Gastrocnemius medialis (tissue), 4 donors: ENCODE measurements at regions of chr6 and their contacts with region 1.

Region 1: DNA sequence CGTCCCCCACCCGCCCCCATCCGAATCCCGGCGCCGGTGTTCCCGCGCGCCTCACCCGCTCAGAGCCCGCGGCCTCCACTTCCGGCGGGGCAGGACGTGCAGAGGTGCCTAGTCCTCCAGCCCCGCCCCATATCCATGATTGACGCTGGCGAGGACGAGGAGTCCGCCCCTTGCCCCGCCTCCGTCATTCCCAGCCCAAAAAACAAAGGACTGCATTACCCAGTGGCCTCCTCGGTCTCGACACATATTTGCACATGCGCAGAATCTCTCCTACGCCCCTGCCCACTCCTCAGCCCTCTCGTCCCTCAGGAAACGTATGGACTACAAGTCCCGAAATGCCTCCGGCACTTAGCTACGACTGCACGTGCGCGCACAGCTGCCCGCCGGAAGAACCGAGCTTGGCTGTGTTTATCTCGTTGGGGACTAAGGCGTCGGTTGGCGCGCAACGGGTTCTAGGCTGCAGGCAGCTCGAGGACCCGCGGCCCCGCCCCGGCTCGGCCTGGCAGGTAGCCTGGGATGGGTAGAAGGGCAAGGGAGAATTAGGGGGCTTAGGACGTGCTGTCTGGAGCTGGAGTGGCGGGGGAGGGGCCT is at the starts of genes KLHDC3 and MEA1:
- DNase-seq: peak; percentile 100
- ATAC-seq: peak; percentile 94 to 97
- H3K4me3 ChIP-seq: peak within 1 kb of the TSS; percentile 77 to 90 (median 82)
- H3K27ac ChIP-seq: peak within 1 kb of the TSS; percentile 95 to 98 (median 98)
- H3K4me1 ChIP-seq: peaks cover 54 to 59% of the 10 kb centered on the region in 2 donors
- H3K27me3 ChIP-seq: no peaks in the 10 kb centered on the region
- CTCF ChIP-seq: no peak
- POLR2A ChIP-seq: peak; percentile 66
- total RNA-seq, gene KLHDC3: 66.5 to 164 (median 119) TPM
- total RNA-seq, gene MEA1: 25.0 to 33.5 (median 25.9) TPM

Region 2: GRCh38 chr6:41735427-41736356 is 1278.2 kb before region 1 on chr6 and contains the start of gene TFEB:
- in situ Hi-C with region 1: no loop called
- intact Hi-C with region 1: loop called (anchors 10 kb)
- DNase-seq: peak; percentile 92 to 93
- ATAC-seq: peak; percentile 43 to 51
- H3K4me3 ChIP-seq: peak within 1 kb of the TSS; percentile 76 to 97 (median 90)
- H3K27ac ChIP-seq: peak within 1 kb of the TSS; percentile 97 to 99 (median 98)
- H3K4me1 ChIP-seq: peaks cover 12 to 19% of the 10 kb centered on the region in 2 donors
- H3K27me3 ChIP-seq: no peaks in the 10 kb centered on the region
- CTCF ChIP-seq: peak; percentile 91 to 100 (median 100)
- POLR2A ChIP-seq: peak; percentile 94 to 97
- total RNA-seq, gene TFEB: 82.8 to 121 (median 93.3) TPM

Region 3: GRCh38 chr6:42217519-42218367 is 796.2 kb before region 1 on chr6 and contains the start of gene MRPS10:
- in situ Hi-C with region 1: no loop called
- intact Hi-C with region 1: loop called (anchors 10 kb)
- DNase-seq: peak; percentile 91 to 94
- ATAC-seq: peak; percentile 100
- H3K4me3 ChIP-seq: peak within 1 kb of the TSS; percentile 73 to 89 (median 84)
- H3K27ac ChIP-seq: peak within 1 kb of the TSS; percentile 81 to 90 (median 86)
- H3K4me1 ChIP-seq: peaks cover 22 to 25% of the 10 kb centered on the region in 2 donors
- H3K27me3 ChIP-seq: no peaks in the 10 kb centered on the region
- CTCF ChIP-seq: no peak
- POLR2A ChIP-seq: peak; percentile 41 to 76
- total RNA-seq, gene MRPS10: 52.2 to 63.7 (median 56.0) TPM

Region 4: GRCh38 chr6:42928986-42929820 is 84.7 kb before region 1 on chr6 and contains the start of gene CNPY3:
- in situ Hi-C with region 1: no loop called
- intact Hi-C with region 1: no loop called
- DNase-seq: peak; percentile 90 to 92
- ATAC-seq: peak; percentile 96
- H3K4me3 ChIP-seq: peak within 1 kb of the TSS; percentile 74 to 93 (median 82)
- H3K27ac ChIP-seq: peak within 1 kb of the TSS; percentile 79 to 94 (median 88)
- H3K4me1 ChIP-seq: peaks cover 17 to 19% of the 10 kb centered on the region in 2 donors
- H3K27me3 ChIP-seq: no peaks in the 10 kb centered on the region
- CTCF ChIP-seq: peak in 2 of 5 experiments; percentile 17 to 24
- POLR2A ChIP-seq: peak; percentile 41 to 47
- total RNA-seq, gene CNPY3: 7.1 to 13.5 (median 9.3) TPM

Region 5: GRCh38 chr6:42984001-42984923 is 29.7 kb before region 1 on chr6 and contains the start of gene PPP2R5D:
- in situ Hi-C with region 1: no loop called
- intact Hi-C with region 1: loop called (anchors 2 kb)
- DNase-seq: peak; percentile 98 to 99
- ATAC-seq: peak; percentile 98 to 100
- H3K4me3 ChIP-seq: peak within 1 kb of the TSS; percentile 83 to 89 (median 86)
- H3K27ac ChIP-seq: peak within 1 kb of the TSS; percentile 85 to 95 (median 90)
- H3K4me1 ChIP-seq: peaks cover 39 to 49% of the 10 kb centered on the region in 2 donors
- H3K27me3 ChIP-seq: no peaks in the 10 kb centered on the region
- CTCF ChIP-seq: peak in 1 of 5 experiments; percentile 8
- POLR2A ChIP-seq: peak; percentile 72 to 80
- total RNA-seq, gene PPP2R5D: 44.3 to 68.2 (median 52.6) TPM

Region 6: GRCh38 chr6:43035495-43036194 is 21.7 kb after region 1 on chr6:
- in situ Hi-C with region 1: no loop called
- intact Hi-C with region 1: loop called (anchors 2 kb)
- DNase-seq: peak; percentile 87 to 97
- ATAC-seq: peak; percentile 94 to 98
- H3K4me3 ChIP-seq: no peak overlapping the region
- H3K27ac ChIP-seq: peak overlapping the region; percentile 82 to 94 (median 92)
- H3K4me1 ChIP-seq: peaks cover 26 to 33% of the 10 kb centered on the region in 2 donors
- H3K27me3 ChIP-seq: no peaks in the 10 kb centered on the region
- CTCF ChIP-seq: peak in 2 of 5 experiments; percentile 12 to 20
- POLR2A ChIP-seq: no peak

Region 7: DNA sequence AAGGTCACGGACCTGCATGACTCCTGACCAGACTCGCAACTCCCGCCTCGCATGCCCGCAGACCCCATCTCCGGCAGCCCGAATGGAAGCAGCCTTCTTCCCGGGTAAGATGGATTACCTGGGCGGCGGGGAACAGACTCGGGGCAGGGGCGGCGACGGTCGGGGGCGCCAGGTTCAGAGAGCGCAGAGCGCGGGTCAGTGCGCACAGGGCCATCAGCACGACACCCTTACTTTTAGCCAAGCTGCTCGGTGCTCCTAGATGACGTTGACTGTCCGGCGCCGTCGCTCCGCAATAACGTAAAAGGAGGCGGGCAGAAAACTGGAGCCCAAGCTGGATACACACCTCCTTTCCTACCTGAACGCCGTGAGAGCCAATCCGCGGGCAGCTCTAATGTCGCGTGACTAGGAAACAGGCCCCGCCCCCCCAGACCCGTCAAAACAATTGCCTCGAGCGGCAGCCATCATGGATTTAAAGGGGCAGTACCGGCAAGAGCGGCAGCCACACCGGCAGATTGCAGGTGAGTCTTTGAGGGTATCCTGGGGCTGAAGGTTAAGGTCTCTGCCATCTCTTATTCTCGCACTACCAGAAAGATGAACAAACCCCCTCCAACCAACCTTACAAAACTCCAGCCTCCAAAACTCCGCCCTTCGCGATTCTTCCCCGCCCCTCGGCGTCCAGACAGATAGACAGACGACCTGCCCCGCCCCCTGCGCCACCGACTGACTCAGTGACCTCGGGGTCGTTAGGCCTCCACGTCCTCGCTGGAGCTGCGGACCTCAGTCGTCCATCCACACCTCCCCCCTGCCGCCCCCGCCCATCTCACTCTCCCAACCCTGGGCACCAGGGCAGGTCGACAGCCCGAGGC is 45.5 kb after region 1 on chr6 and contains the starts of genes KLC4 and MRPL2:
- in situ Hi-C with region 1: no loop called
- intact Hi-C with region 1: loop called (anchors 1 kb)
- DNase-seq: peak; percentile 99
- ATAC-seq: peak; percentile 94 to 97
- H3K4me3 ChIP-seq: peak within 1 kb of the TSS; percentile 87 to 98 (median 92)
- H3K27ac ChIP-seq: peak within 1 kb of the TSS; percentile 90 to 99 (median 95)
- H3K4me1 ChIP-seq: peaks cover 24 to 30% of the 10 kb centered on the region in 2 donors
- H3K27me3 ChIP-seq: no peaks in the 10 kb centered on the region
- CTCF ChIP-seq: no peak
- POLR2A ChIP-seq: peak; percentile 72 to 88
- total RNA-seq, gene KLC4: 12.2 to 19.3 (median 14.6) TPM
- total RNA-seq, gene MRPL2: 34.1 to 64.9 (median 41.1) TPM

Region 8: DNA sequence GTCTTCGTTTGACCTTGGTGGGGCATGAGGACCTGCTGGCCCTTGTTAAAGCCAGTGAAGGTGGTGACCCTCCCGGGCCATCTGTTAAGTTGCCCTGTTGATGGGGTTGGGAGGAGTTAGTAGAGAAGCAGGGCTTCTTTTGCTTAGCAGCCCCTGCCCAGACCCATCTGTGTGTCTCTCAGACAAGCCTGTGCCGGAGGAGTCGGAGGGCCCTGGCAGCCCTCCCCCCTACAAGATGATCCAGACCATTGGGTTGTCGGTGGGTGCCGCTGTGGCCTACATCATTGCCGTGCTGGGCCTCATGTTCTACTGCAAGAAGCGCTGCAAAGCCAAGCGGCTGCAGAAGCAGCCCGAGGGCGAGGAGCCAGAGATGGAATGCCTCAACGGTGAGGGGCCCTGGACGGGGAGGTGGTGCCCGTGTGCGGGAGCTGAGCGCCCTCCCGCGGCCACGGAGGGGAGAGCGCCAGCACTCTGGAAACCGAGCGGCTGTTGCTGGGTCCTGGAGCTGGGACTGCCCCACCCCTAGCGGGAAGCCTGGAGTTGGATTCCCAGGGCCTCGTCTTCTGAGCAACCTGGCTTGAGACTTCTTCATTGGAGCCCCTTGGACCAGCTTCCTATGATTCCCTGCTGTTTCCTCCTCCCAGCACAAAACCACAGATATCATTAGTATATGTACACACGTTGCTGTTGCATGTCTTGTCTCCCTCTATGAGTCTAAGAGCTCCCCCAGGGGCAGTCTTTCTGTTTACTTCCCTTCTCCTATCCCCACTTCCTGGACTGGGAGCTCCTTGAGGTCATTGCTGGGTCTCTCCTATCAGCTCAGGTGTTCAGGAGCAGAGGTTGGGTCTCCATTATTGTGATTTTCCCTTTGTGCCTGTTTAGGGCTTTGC is 129.5 kb after region 1 on chr6:
- in situ Hi-C with region 1: no loop called
- intact Hi-C with region 1: loop called (anchors 2 kb)
- DNase-seq: peak; percentile 46 to 80
- ATAC-seq: peak; percentile 81 to 86
- H3K4me3 ChIP-seq: peak overlapping the region in 1 of 4 donors; percentile 5
- H3K27ac ChIP-seq: peak overlapping the region in 2 of 4 donors; percentile 31 to 50
- H3K4me1 ChIP-seq: peaks cover 21 to 24% of the 10 kb centered on the region in 2 donors
- H3K27me3 ChIP-seq: no peaks in the 10 kb centered on the region
- CTCF ChIP-seq: peak; percentile 87 to 96 (median 94)
- POLR2A ChIP-seq: no peak